ENCODE measurements at regions of chr6 and their contacts with region 1.

Region 1: GRCh38 chr6:119467488-119468081 is 118.0 kb upstream of the MAN1A1 start:
- DNase-seq: no peak
- H3K4me3 ChIP-seq: no peak overlapping the region
- H3K27ac ChIP-seq: no peak overlapping the region
- H3K4me1 ChIP-seq: 0 out of 2 replicates have a peak, but pooled peaks cover 5% of the 10 kb centered on the region
- H3K27me3 ChIP-seq: no peaks in the 10 kb centered on the region
- CTCF ChIP-seq: no peak

Region 2: GRCh38 chr6:119182875-119183274 is 284.7 kb before region 1 on chr6:
- CTCF ChIA-PET with region 1: no interaction called
- POLR2A ChIA-PET with region 1: no interaction called
- intact Hi-C with region 1: no loop called
- DNase-seq: no peak
- H3K4me3 ChIP-seq: no peak overlapping the region
- H3K27ac ChIP-seq: no peak overlapping the region
- H3K4me1 ChIP-seq: no peaks in the 10 kb centered on the region
- H3K27me3 ChIP-seq: no peaks in the 10 kb centered on the region
- CTCF ChIP-seq: no peak

Region 3: GRCh38 chr6:119436583-119436982 is 31.0 kb before region 1 on chr6:
- CTCF ChIA-PET with region 1: interaction called, 18 read pairs
- POLR2A ChIA-PET with region 1: no interaction called
- intact Hi-C with region 1: no loop called
- DNase-seq: no peak
- H3K4me3 ChIP-seq: no peak overlapping the region
- H3K27ac ChIP-seq: no peak overlapping the region
- H3K4me1 ChIP-seq: 0 out of 2 replicates have a peak, but pooled peaks cover 4% of the 10 kb centered on the region
- H3K27me3 ChIP-seq: no peaks in the 10 kb centered on the region
- CTCF ChIP-seq: no peak

Measured in PC-9 (cell line).